GM12878 (cell line): ENCODE measurements at regions of chr7 and their contacts with region 1.

Region 1: DNA sequence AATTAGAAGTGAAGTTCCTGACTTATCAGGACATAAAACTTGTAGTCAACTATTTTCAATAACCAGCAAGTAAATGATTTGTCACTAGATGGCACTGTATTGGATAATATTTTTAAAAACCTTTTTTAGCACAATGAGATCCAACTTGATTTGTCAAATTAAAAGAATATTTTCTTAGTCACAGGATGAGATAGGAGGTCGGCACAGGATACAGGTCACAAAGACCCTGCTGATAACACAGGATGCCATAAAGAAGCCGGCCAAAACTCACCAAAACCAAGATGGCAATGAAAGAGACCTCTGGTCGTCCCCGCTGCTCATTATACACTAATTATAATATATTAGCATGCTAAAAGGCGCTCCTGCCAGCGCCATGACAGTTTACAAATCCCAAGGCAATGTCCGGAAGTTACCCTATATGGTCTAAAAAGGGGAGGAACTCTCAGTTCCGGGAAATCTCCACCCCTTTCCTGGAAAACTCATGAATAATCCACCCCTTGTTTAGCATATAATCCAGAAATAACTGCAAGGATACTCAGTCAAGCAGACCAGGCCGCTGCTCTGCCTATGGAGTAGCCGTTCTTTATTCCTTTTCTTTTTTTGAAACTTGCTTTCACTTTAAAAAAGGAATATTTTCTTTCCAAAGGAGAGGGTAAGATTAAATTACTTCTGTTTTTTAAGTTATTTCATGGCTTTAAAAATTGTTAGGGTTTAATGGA is 255.7 kb upstream of the MKLN1 start:
- DNase-seq: no peak
- ATAC-seq: no peak
- H3K4me3 ChIP-seq: no peak overlapping the region
- H3K27ac ChIP-seq: no peak overlapping the region
- H3K4me1 ChIP-seq: no peaks in the 10 kb centered on the region; the same call in 1 of the 2 replicates
- H3K27me3 ChIP-seq: no peaks in the 10 kb centered on the region
- CTCF ChIP-seq: peak in 2 of 3 experiments; percentile 13 to 34; a peak in 2 of 6 replicates
- EP300 ChIP-seq: no peak
- POLR2A ChIP-seq: no peak
- RAD21 ChIP-seq: peak; percentile 19; the same call in 1 of the 2 replicates

Region 2: DNA sequence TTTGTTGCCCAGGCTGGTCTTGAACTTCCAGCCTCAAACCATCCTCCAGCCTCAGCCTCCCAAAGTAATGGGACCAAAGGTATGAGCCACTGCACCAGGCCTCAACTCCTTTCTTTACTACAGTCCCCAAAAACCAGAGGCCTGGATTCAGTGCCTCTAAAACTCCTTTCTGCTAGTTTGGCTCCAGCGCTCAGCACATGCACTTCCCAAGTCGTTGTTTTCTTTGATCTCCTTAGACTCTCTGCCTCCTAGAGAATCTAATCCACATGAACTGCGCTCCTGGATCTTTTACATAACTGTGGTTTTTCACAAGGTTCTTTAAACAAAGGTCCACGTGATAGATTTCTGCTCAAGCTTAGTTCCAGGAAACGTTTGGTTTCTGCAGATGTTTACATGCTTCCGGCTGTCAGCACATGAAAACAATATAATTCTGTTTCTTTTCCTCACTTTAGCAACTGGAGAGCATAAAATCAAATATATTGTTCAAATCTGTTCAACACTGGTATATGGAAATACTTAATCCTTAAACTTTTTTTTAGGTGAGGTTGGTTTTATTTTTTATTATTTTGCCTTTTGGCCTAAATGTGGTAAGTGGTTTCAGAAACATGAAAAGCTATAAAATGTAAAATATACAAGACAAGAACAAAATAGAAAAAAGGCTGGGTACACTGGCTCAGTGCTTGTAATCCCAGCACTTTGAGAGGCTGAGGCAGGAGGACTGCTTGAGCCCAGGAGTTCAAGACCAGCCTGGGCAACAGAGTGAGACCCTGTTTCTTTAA is 14.7 kb before region 1 on chr7:
- CTCF ChIA-PET with region 1: interaction called, 18 read pairs
- POLR2A ChIA-PET with region 1: interaction called, 8 read pairs
- RAD21 ChIA-PET with region 1: interaction called, 3 read pairs
- SMC1A ChIA-PET with region 1: interaction called, 3 read pairs
- in situ Hi-C with region 1: no loop called
- intact Hi-C with region 1: no loop called
- DNase-seq: no peak
- ATAC-seq: peak; percentile 75
- H3K4me3 ChIP-seq: no peak overlapping the region
- H3K27ac ChIP-seq: no peak overlapping the region; the same call in 1 of the 2 replicates
- H3K4me1 ChIP-seq: 0 out of 2 replicates have a peak, but pooled peaks cover 6% of the 10 kb centered on the region
- H3K27me3 ChIP-seq: no peaks in the 10 kb centered on the region
- CTCF ChIP-seq: no peak
- EP300 ChIP-seq: no peak
- POLR2A ChIP-seq: no peak
- RAD21 ChIP-seq: no peak

Region 3: DNA sequence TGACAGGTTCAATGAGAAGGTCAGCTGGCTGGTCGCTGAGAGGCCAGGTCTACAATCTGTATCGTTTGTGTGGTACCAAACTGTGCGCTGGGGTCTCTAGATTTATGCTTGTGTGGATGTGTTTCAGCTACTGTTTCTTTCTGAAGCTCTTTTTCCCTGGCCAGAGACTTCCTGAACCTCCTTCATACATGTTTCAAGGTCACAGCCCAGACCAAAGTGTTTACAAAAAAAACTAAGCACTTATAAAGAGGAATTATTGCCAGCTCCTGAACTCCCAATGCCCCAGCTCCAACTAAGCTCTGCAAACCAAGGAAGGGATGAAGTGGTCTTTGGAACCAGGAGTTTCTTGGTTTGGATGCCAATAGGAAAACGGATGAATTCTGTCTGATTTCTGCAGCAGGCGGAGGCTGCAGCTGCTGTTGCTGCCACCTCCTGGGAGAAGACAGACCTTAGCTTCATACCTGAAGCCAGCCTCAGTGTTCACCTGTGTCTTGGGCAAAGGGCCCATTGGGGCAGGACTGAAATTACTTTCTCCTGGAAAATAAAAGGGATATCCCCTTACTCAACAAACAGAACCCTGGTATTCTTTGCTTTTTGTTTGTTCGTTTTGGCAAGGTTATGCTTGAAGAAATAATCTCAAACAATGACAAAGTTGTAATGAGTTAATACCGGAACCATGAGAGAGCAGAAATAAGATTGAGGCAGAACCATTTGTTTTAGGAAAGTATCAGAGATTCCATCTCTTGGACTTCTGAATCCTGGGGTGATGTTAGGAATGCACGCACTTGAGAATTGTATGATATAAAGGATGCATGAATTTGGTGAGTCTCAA is 231.1 kb after region 1 on chr7:
- CTCF ChIA-PET with region 1: interaction called, 15 read pairs
- POLR2A ChIA-PET with region 1: no interaction called
- RAD21 ChIA-PET with region 1: interaction called, 8 read pairs
- SMC1A ChIA-PET with region 1: interaction called, 15 read pairs
- in situ Hi-C with region 1: no loop called
- intact Hi-C with region 1: loop called (anchors 1 kb)
- DNase-seq: no peak
- ATAC-seq: peak; percentile 81
- H3K4me3 ChIP-seq: no peak overlapping the region
- H3K27ac ChIP-seq: no peak overlapping the region
- H3K4me1 ChIP-seq: no peaks in the 10 kb centered on the region
- H3K27me3 ChIP-seq: no peaks in the 10 kb centered on the region; a peak in 1 of 4 replicates
- CTCF ChIP-seq: peak; percentile 59 to 68 (median 64); a peak in 5 of 6 replicates
- EP300 ChIP-seq: no peak
- POLR2A ChIP-seq: no peak
- RAD21 ChIP-seq: peak; percentile 87

Region 4: DNA sequence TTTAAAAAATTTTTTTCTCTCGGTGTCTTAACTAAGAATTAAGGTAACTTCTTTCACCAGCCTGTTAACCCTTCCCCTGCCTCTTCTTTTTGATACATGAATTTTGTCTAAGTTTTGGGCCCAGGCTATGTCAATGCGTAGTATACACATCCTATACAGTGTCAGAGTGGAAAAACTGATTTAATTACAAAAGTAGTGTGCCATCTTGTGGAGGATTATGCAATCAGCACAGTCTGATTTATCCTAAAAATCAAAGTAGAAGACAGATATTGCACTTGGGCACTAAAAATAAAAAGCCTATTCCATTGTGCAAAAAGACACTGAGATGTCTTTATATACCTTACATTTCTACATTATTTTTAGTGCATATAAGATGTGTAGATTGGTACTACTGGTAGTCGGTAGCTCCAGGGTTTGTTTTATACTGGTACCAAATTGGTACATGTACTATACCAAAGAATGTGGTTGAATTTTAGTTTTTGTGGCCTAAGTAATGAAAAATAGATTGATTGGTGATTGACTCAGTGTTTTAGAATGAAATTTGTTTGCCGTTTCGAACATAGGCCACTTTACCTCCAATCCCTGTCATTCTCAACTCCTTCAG is 352.4 kb after region 1 on chr7:
- CTCF ChIA-PET with region 1: interaction called, 39 read pairs
- POLR2A ChIA-PET with region 1: no interaction called
- RAD21 ChIA-PET with region 1: interaction called, 10 read pairs
- SMC1A ChIA-PET with region 1: interaction called, 7 read pairs
- in situ Hi-C with region 1: loop called (anchors 10 kb)
- intact Hi-C with region 1: loop called (anchors 1 kb)
- DNase-seq: peak; percentile 4
- ATAC-seq: peak; percentile 87
- H3K4me3 ChIP-seq: no peak overlapping the region
- H3K27ac ChIP-seq: no peak overlapping the region
- H3K4me1 ChIP-seq: no peaks in the 10 kb centered on the region
- H3K27me3 ChIP-seq: no peaks in the 10 kb centered on the region
- CTCF ChIP-seq: peak; percentile 25 to 61 (median 55); a peak in 5 of 6 replicates
- EP300 ChIP-seq: no peak
- POLR2A ChIP-seq: no peak
- RAD21 ChIP-seq: peak; percentile 64